Left cardiac atrium (tissue), 4 donors: ENCODE measurements at regions of chr1 and their contacts with region 1.

Region 1: GRCh38 chr1:100921109-100921706 is 25.3 kb downstream of the SLC30A7 start:
- DNase-seq: no peak
- ATAC-seq: no peak

Region 2: DNA sequence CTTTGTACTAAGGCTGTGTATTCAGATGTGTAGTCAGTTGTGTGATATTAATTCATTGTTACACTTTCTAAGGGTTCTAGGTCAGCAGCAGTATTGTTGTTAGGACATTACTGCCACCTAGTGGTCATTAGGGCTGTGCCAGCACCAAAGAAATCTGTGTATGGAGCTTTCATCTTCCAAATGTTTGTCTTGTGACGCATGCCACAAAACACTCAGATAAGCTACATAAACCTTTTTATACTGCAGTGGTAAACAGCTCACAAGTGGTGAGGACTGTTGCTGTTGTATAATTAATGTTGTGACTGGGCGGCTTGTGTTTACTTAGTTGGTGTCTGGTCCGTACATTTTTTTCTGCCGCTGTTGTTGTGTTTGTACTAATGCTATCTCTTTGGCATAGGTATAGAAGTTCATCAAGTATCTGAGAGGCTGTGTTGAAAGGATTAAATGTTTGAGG is 367.3 kb after region 1 on chr1:
- intact Hi-C with region 1: loop called (anchors 2 kb)
- DNase-seq: peak; percentile 66
- ATAC-seq: peak; percentile 92 to 93

Region 3: DNA sequence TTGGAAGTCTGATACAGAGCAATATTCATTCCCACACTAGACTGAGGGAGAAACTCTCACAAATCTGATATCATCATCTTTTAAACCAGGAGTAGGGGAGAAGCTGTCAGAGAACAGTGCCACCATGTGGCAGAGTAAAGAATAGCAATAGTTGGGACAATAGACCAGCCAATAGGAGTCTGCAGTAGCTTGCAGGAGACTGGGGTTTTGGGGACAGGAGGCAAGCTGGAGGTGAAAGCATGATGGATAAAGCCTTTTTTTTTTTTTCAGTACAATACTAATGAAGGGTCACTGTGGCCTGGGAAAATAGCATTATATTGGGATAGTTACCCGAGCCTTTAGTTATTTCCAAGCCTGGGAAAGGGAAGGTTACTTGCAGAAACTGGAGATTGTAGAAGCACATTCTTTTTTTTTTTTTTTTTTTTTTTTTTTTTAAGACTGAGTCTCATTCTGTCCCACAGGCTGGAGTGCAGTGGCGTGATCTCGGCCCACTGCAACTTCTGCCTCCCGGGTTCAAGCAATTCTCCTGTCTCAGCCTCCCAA is 436.3 kb after region 1 on chr1:
- intact Hi-C with region 1: loop called in 1 of 2 experiments (anchors 5 kb)
- DNase-seq: no peak
- ATAC-seq: peak; percentile 89 to 93